Adrenal gland (tissue), 19 donors: ENCODE measurements at regions of chr5 and their contacts with region 1.

Region 1: DNA sequence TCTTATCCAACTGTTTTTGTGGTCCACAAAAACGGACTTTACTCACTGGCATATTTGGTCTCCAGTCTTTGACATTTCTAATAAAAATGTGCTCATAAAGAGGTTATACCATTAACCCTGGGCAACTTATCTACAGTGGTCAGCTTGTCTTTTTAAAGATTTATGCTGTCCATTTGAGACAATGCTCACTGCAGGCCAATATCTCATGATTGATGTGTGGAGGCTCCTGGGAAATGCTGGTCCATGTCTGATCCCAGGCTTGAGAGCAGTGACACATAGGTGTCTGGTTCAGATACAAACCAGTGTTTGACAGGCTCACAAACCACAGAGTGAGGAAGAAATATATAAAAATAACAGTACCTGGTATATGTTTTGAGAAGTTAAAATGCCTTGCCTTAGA is 180.7 kb downstream of the TARS1 start:
- DNase-seq: no peak
- H3K4me3 ChIP-seq: no peak overlapping the region
- H3K27ac ChIP-seq: no peak overlapping the region
- H3K4me1 ChIP-seq: no peaks in the 10 kb centered on the region
- H3K27me3 ChIP-seq: no peaks in the 10 kb centered on the region
- CTCF ChIP-seq: no peak
- POLR2A ChIP-seq: no peak

Region 2: GRCh38 chr5:33513462-33514185 is 107.9 kb before region 1 on chr5:
- intact Hi-C with region 1: no loop called
- DNase-seq: no peak
- H3K4me3 ChIP-seq: no peak overlapping the region
- H3K27ac ChIP-seq: no peak overlapping the region
- H3K4me1 ChIP-seq: no peaks in the 10 kb centered on the region
- H3K27me3 ChIP-seq: no peaks in the 10 kb centered on the region
- CTCF ChIP-seq: no peak
- POLR2A ChIP-seq: no peak

Region 3: DNA sequence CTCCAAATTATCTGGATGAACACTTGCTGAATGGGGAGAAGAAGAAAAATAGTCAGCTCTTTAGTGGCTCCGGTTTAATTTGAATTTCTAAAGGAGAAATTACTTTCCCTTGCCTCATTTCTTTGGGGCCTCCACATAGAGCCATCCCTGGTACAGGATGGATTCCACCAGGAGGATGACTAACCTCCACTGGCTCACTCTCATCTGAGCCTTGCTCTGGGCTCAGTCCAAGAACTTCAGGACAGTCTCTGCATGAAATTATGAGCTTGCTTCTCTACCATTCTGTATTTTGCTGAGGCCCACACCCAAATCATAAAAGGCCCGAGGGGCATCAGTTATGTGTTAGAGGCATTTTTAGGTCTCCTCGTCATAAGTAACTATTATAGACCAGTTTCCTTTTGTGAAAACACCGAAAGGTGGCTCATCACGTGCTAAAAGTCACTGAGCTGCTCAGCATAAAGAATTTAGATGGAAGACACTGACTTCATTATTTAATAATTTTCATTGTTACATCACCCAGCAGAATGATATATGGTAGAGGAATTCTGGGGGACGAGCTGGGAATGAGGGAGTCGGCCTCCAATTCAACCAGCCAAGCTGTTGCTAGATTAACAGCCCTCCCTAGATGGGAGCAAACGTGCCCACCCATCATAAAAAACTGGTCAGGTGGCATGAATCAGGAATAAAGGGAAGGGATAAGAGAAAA is 41.4 kb after region 1 on chr5:
- intact Hi-C with region 1: no loop called
- DNase-seq: no peak
- H3K4me3 ChIP-seq: no peak overlapping the region
- H3K27ac ChIP-seq: no peak overlapping the region
- H3K4me1 ChIP-seq: no peaks in the 10 kb centered on the region
- H3K27me3 ChIP-seq: no peaks in the 10 kb centered on the region
- CTCF ChIP-seq: no peak
- POLR2A ChIP-seq: no peak

Region 4: GRCh38 chr5:33944543-33945132 is 323.1 kb after region 1 on chr5:
- intact Hi-C with region 1: loop called in 1 of 2 experiments (anchors 5 kb)
- DNase-seq: no peak
- H3K4me3 ChIP-seq: no peak overlapping the region
- H3K27ac ChIP-seq: no peak overlapping the region
- H3K4me1 ChIP-seq: no peaks in the 10 kb centered on the region
- H3K27me3 ChIP-seq: no peaks in the 10 kb centered on the region
- CTCF ChIP-seq: no peak
- POLR2A ChIP-seq: no peak